ENCODE measurements at regions of chr2 and their contacts with region 1.

Region 1: DNA sequence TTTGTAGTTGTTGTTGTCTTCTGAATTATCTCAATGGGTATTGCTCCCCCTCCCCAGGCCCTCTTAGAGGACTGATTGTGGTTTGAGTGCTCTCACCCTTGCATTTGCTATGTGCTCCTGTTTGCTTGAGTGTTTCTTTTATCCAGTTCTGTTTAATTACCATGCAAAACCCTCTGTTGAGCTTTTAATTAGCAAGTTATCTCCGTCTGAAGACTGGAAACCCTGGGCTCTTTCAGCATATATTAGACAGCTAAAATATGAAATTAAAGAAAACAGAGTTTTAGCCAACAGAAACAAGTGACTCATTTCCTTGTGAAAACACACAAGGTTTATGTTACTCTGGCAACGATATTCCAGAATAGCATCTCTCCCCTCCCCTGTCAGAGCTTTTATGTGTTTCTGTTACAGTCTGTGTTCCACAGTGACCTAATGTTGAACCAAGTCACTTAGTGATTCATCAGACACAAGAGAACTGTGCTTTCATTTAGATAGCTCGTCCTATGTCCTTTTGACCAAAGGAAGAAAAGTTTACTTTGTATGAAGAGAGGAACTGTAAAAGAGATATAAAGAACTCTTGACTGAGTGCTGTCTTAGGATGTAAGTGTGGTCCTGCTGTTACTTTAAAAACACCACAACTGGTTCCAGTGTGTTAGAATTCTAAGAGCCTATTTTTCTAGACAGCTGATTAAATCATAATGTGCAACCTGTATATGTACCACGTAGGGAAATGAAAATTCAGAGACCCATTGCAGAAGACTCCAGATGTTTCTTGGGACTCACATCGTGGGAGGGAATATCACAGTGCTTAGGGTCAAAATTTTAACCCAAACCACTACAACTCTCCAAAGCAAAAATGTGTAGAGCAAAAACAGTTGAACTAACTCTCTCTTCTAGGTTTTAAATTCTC is 172.8 kb upstream of the RBMS1 start:
- DNase-seq: peak; percentile 99
- ATAC-seq: peak; percentile 99
- H3K4me3 ChIP-seq: peak overlapping the region; percentile 12; the same call in 1 of the 2 replicates
- H3K27ac ChIP-seq: peak overlapping the region; percentile 60; the same call in 1 of the 2 replicates
- H3K4me1 ChIP-seq: peaks cover 2% of the 10 kb centered on the region
- H3K27me3 ChIP-seq: no peaks in the 10 kb centered on the region
- CTCF ChIP-seq: no peak
- POLR2A ChIP-seq: peak; percentile 18; the same call in 1 of the 2 replicates
- RAD21 ChIP-seq: peak; percentile 22; the same call in 1 of the 2 replicates

Region 2: GRCh38 chr2:160582490-160583145 is 83.8 kb before region 1 on chr2:
- CTCF ChIA-PET with region 1: no interaction called
- POLR2A ChIA-PET with region 1: no interaction called
- dilution Hi-C with region 1: no loop called
- in situ Hi-C with region 1: no loop called
- intact Hi-C with region 1: no loop called
- DNase-seq: peak; percentile 75
- ATAC-seq: peak; percentile 81
- H3K4me3 ChIP-seq: no peak overlapping the region
- H3K27ac ChIP-seq: peak overlapping the region; percentile 70; the same call in 1 of the 2 replicates
- H3K4me1 ChIP-seq: peaks cover 18% of the 10 kb centered on the region
- H3K27me3 ChIP-seq: no peaks in the 10 kb centered on the region
- CTCF ChIP-seq: 0 out of 2 replicates have a peak, but pooled peaks have one; percentile 2
- POLR2A ChIP-seq: no peak
- RAD21 ChIP-seq: no peak

Region 3: DNA sequence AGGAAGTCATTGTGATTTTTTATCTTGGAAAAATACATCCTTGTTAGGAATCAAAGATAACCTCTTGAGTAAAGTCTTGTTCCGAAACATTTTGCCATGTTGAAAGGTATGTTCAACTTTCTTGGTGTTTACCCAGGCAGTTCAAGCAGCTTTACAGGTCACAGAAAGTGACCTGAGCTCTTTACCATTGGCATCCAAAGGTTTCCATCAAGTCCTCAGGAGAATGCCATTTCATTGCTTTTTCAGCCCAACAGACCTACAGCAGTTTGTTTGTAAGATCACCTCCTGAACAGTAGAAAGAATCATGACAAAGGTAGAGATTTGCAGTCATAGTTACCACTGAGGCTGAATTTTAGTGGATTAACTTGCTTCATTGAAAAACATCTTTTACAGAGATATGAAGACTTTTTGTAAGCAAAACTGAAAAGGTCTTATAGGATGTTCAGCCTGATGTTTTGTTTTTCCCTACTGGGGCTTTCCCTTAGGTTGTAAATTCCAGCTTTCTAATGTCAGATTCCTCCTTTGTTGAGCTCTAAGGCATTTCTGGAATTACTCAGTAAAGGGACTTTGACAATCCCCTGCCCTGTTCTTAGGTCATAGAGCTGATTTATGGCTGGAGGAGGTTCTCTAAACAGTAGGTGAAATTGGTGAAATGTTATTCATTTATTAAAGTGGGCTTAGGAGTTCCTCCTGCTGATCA is 64.0 kb after region 1 on chr2:
- CTCF ChIA-PET with region 1: no interaction called
- POLR2A ChIA-PET with region 1: no interaction called
- dilution Hi-C with region 1: no loop called
- in situ Hi-C with region 1: no loop called
- intact Hi-C with region 1: loop called (anchors 5 kb)
- DNase-seq: no peak
- ATAC-seq: 0 out of 2 replicates have a peak, but pooled peaks have one; percentile 14
- H3K4me3 ChIP-seq: no peak overlapping the region
- H3K27ac ChIP-seq: no peak overlapping the region
- H3K4me1 ChIP-seq: peaks cover 5% of the 10 kb centered on the region; the same call in 1 of the 2 replicates
- H3K27me3 ChIP-seq: no peaks in the 10 kb centered on the region
- CTCF ChIP-seq: no peak
- POLR2A ChIP-seq: no peak
- RAD21 ChIP-seq: no peak

Region 4: DNA sequence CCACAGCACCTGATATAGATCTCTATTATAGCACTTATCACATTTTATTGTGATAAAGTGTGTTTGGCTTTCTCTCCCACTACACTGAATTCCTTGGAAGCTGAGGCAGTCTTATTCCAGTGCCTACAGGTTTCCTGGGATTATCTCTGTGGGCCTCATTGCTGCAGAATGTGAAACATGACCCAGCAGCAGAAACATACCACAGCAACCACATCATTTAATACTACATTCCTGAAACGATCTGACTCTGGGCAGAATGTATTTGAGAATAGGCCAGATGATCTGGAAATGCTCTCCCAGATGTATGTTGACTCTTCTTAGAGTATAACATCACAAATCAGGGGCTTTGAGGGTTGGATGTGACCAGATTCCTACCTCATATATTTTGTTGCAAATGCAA is 170.3 kb after region 1 on chr2:
- CTCF ChIA-PET with region 1: no interaction called
- POLR2A ChIA-PET with region 1: no interaction called
- dilution Hi-C with region 1: no loop called
- in situ Hi-C with region 1: no loop called
- intact Hi-C with region 1: loop called (anchors 5 kb)
- DNase-seq: peak; percentile 96
- ATAC-seq: peak; percentile 97
- H3K4me3 ChIP-seq: no peak overlapping the region
- H3K27ac ChIP-seq: peak overlapping the region; percentile 76; the same call in 1 of the 2 replicates
- H3K4me1 ChIP-seq: peaks cover 5% of the 10 kb centered on the region
- H3K27me3 ChIP-seq: no peaks in the 10 kb centered on the region
- CTCF ChIP-seq: no peak
- POLR2A ChIP-seq: no peak
- RAD21 ChIP-seq: no peak

Measured in IMR-90 (cell line).